GM13977 (cell line): ENCODE measurements at regions of chr10 and their contacts with region 1.

Region 1: GRCh38 chr10:22988581-22989360 is 60.9 kb downstream of the ARMC3 start:
- DNase-seq: peak; percentile 64
- CTCF ChIP-seq: peak; percentile 91

Region 2: GRCh38 chr10:22316285-22317120 is 672.3 kb before region 1 on chr10 and contains the start of gene COMMD3:
- in situ Hi-C with region 1: loop called (anchors 25 kb)
- DNase-seq: peak; percentile 82
- CTCF ChIP-seq: no peak

Region 3: DNA sequence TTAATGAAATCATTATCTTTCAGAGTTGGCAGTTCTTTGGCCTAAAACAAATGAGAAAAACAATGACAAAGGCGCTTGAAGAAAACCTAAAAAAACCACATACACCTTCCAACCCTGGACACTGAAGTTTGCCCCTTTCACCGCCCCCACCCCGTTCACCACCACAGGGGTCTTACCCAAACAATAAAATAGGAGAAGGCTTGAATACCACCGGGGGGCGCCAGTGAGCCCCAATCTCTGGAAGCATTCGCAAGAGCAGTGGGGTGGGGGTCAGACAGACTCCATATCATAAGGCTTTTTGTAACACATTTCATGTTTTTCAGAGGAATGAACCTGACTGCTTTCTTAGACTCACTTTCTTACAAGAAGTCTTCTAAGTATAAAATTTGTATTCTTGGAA is 438.0 kb before region 1 on chr10:
- in situ Hi-C with region 1: loop called (anchors 10 kb)
- DNase-seq: peak; percentile 52
- CTCF ChIP-seq: peak; percentile 59